GM18951 (cell line): ENCODE measurements at regions of chr1 and their contacts with region 1.

Region 1: GRCh38 chr1:110538075-110538474 is 19.1 kb upstream of the KCNA10 start:
- POLR2A ChIP-seq: no peak

Region 2: GRCh38 chr1:110726755-110727154 is 188.7 kb after region 1 on chr1:
- in situ Hi-C with region 1: no loop called
- POLR2A ChIP-seq: no peak

Region 3: GRCh38 chr1:110770832-110771614 is 232.9 kb after region 1 on chr1:
- in situ Hi-C with region 1: loop called (anchors 10 kb)
- POLR2A ChIP-seq: no peak